Colonic mucosa (tissue), 4 donors: ENCODE measurements at regions of chr11 and their contacts with region 1.

Region 1: GRCh38 chr11:17978553-17979287 is 34.1 kb downstream of the SERGEF start:
- DNase-seq: peak; percentile 35
- H3K4me3 ChIP-seq: no peak overlapping the region
- H3K27ac ChIP-seq: no peak overlapping the region
- H3K4me1 ChIP-seq: no peaks in the 10 kb centered on the region
- H3K27me3 ChIP-seq: no peaks in the 10 kb centered on the region
- CTCF ChIP-seq: peak; percentile 51

Region 2: DNA sequence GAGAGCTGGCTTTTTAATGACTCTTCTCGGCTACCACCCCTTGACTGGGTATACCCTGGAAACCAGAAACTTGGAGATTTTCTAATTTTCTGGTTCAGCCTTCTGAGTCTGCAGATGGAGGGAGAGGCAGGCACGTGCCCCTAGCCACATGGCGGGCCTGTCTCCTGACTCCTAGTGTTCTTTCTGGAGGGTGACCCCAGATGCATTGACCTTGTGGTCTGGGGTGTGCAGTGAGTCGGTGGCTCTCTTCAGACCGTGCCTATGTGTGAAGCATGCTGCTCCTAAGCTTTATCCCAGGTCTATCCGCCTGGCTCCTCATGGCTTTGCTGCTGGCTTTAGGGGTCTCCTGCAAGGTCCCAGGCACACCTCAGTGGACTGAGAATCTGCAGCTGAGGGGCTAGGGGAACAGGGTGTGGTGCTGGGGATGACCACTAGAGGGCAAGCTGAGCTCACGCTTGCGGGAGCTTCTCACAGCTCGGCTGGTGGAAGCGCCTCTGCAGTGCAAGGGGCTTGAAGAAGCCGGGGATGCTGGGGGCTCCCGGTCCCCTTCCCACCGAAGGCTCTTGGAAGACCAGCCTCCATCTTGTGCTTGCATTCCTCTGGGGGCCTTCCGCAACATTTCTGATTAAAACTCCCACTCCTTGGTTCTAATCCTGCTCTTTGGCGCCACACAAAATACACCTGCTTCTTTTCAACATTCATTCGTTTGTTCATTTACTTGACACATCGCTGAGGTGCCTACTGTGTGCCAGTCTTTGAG is 379.8 kb before region 1 on chr11:
- intact Hi-C with region 1: loop called (anchors 2 kb)
- DNase-seq: peak; percentile 72
- H3K4me3 ChIP-seq: no peak overlapping the region
- H3K27ac ChIP-seq: no peak overlapping the region
- H3K4me1 ChIP-seq: no peaks in the 10 kb centered on the region
- H3K27me3 ChIP-seq: no peaks in the 10 kb centered on the region
- CTCF ChIP-seq: peak; percentile 86

Region 3: GRCh38 chr11:17730608-17731462 is 247.9 kb before region 1 on chr11:
- intact Hi-C with region 1: loop called (anchors 2 kb)
- DNase-seq: peak; percentile 74
- H3K4me3 ChIP-seq: no peak overlapping the region
- H3K27ac ChIP-seq: no peak overlapping the region
- H3K4me1 ChIP-seq: no peaks in the 10 kb centered on the region
- H3K27me3 ChIP-seq: peaks cover 9% of the 10 kb centered on the region
- CTCF ChIP-seq: peak; percentile 82

Region 4: DNA sequence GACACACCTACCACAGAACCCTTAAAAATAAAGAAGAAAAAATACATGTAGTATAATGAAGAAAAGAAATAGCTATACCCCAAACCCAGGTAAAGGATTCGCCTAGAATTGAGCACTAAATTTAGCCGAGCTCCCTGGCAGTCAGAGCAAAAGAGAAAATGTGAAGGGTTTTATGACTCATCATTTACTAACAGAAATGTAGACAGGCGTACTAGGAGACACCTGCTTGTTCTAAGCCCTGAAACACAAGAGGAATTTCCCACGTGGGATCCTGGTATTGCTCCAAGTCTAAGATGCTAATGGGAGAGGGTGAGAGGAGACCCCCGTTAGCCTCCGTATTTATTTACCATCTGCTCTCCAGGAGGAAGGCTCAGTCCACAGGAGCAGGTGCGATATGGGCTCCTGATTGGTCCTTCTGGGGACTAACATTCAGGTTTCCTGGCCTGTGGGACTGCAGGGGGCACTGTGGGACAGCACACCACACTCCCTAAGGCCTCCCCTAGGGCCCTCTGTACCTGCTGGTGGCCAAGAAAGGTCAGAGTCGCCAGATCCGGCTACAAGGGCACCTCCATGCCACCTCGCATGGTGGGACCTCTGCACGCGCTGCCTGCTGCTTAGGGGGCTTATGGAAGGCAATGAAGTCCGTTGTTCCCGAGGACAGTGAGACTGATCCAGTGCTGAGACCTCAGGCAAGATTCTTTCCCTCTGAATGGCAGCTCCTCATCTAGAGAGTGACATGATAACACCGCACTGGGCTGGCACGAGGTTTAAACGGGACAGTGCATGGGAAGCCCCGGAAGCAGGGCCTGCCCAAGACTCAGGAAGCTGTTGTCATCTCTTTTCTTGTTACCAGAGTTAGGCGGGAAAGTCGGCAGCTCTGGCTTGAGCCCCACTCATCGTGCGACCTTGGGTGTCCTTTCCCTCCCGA is 218.4 kb before region 1 on chr11:
- intact Hi-C with region 1: loop called (anchors 2 kb)
- DNase-seq: peak; percentile 66
- H3K4me3 ChIP-seq: no peak overlapping the region
- H3K27ac ChIP-seq: no peak overlapping the region
- H3K4me1 ChIP-seq: no peaks in the 10 kb centered on the region
- H3K27me3 ChIP-seq: no peaks in the 10 kb centered on the region
- CTCF ChIP-seq: peak; percentile 50